ENCODE measurements at regions of chr6 and their contacts with region 1.

Region 1: DNA sequence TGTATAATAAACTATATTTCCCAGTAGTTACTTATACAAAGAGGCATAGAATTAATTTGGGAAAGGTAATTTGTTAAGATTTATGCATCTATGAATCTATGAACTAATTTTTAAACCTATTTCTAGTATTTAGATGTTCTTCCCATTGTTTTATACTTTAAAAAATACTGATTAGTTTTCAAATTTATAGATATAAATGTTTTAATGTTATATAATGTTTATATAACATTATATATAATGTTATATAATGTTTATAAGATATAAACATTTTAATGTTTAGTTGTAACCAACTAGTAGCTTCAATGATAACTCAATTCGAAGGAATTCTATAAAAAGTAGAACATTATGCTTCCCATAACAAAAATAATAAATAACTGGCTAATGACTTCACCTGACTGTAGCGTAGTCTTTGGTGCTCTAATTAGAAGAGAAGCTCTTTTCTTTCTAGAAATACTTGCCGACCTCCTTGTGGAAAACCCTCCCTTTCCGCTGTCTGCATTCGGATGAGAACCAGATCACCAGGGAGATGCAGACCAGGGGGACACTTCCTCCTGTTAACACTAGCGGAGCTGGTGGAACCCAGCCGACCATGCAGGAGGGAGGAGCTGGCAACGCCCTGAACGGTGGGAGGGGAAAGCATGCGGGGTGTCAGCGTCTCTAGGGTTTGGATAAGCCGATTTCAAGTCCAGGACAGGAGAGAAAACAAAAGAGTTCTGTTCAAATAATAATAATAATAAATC is 158.4 kb downstream of the OR2B2 start:
- DNase-seq: peak in 8 of 9 donors; percentile 38 to 69 (median 45)
- ATAC-seq: peak; percentile 22
- H3K4me3 ChIP-seq: peak overlapping the region; percentile 80
- H3K4me3 Mint-ChIP-seq: peak overlapping the region; percentile 81 to 99 (median 94)
- H3K27ac ChIP-seq: peak overlapping the region; percentile 96
- H3K27ac Mint-ChIP-seq: peak overlapping the region; percentile 84 to 100 (median 97)
- H3K4me1 ChIP-seq: peaks cover 6 to 20% of the 10 kb centered on the region in 2 donors
- H3K4me1 Mint-ChIP-seq: peaks cover 17 to 53% (median 39%) of the 10 kb centered on the region in 7 donors
- H3K27me3 ChIP-seq: no peaks in the 10 kb centered on the region
- H3K27me3 Mint-ChIP-seq: peaks cover 0 to 8% (median 0%) of the 10 kb centered on the region in 5 donors

Region 2: GRCh38 chr6:26025894-26026832 is 1727.7 kb before region 1 on chr6:
- CTCF ChIA-PET with region 1: no interaction called
- POLR2A ChIA-PET with region 1: interaction called, 3 read pairs
- intact Hi-C with region 1: loop called (anchors 5 to 10 kb)
- DNase-seq: peak; percentile 82 to 98 (median 95)
- ATAC-seq: peak; percentile 60
- H3K4me3 ChIP-seq: peak overlapping the region; percentile 75
- H3K4me3 Mint-ChIP-seq: peak overlapping the region; percentile 81 to 99 (median 94)
- H3K27ac ChIP-seq: peak overlapping the region; percentile 94
- H3K27ac Mint-ChIP-seq: peak overlapping the region; percentile 93 to 100 (median 98)
- H3K4me1 ChIP-seq: peaks cover 11 to 22% of the 10 kb centered on the region in 2 donors
- H3K4me1 Mint-ChIP-seq: peaks cover 12 to 81% (median 50%) of the 10 kb centered on the region in 7 donors
- H3K27me3 ChIP-seq: no peaks in the 10 kb centered on the region
- H3K27me3 Mint-ChIP-seq: peaks cover 0 to 9% (median 0%) of the 10 kb centered on the region in 5 donors

Region 3: GRCh38 chr6:26640806-26641205 is 1113.0 kb before region 1 on chr6:
- CTCF ChIA-PET with region 1: no interaction called
- POLR2A ChIA-PET with region 1: no interaction called
- intact Hi-C with region 1: no loop called
- DNase-seq: no peak
- ATAC-seq: no peak
- H3K4me3 ChIP-seq: no peak overlapping the region
- H3K4me3 Mint-ChIP-seq: no peak overlapping the region
- H3K27ac ChIP-seq: no peak overlapping the region
- H3K27ac Mint-ChIP-seq: no peak overlapping the region
- H3K4me1 ChIP-seq: no peaks in the 10 kb centered on the region
- H3K4me1 Mint-ChIP-seq: peaks cover 0 to 2% (median 0%) of the 10 kb centered on the region in 7 donors
- H3K27me3 ChIP-seq: no peaks in the 10 kb centered on the region
- H3K27me3 Mint-ChIP-seq: no peaks in the 10 kb centered on the region

Region 4: DNA sequence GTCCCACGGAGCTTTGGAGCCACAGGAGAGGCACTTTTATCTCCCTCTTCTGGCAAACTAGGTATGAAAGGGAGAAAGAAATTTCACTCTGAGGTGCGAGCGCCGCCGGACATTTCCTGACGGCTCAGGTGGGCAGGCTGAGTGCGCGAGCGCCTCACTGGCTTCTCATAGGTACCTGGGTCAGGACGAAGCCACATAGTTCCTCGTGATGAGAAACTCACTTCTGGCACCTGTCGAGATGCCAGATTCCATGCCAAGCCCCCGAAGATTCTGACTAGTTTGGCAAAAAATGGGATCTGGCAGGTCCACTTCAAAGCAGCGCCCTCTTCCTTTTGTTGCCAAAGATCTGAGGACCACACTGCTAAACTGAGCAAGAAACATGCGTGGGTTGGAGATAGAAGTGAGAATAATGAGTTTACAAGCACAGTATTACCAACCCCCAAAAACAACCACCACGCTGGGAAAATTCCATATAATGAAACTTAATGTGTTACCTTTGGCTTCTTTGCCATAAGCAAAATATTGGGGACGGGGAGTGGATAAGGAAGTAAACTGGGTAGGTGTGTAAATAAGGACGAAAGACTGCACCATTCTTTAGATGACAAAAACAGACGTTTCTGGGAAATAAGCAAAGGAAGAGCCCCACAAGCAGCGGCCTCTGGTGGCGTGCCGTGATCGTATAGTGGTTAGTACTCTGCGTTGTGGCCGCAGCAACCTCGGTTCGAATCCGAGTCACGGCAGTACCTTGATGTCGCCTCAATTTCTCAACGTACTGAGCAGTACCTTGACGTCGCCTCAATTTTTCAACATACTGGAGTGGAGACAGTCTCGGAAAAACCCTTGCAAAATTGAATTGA is 596.2 kb before region 1 on chr6:
- CTCF ChIA-PET with region 1: interaction called, 4 read pairs
- POLR2A ChIA-PET with region 1: interaction called, 4 read pairs
- intact Hi-C with region 1: loop called (anchors 1 to 2 kb)
- DNase-seq: peak in 8 of 9 donors; percentile 77 to 92 (median 87)
- ATAC-seq: peak; percentile 86
- H3K4me3 ChIP-seq: peak overlapping the region; percentile 76
- H3K4me3 Mint-ChIP-seq: peak overlapping the region; percentile 82 to 94 (median 87)
- H3K27ac ChIP-seq: peak overlapping the region; percentile 54
- H3K27ac Mint-ChIP-seq: peak overlapping the region; percentile 80 to 96 (median 92)
- H3K4me1 ChIP-seq: peaks cover 12% of the 10 kb centered on the region in 2 donors
- H3K4me1 Mint-ChIP-seq: peaks cover 29 to 47% (median 43%) of the 10 kb centered on the region in 7 donors
- H3K27me3 ChIP-seq: no peaks in the 10 kb centered on the region
- H3K27me3 Mint-ChIP-seq: peaks cover 0 to 6% (median 0%) of the 10 kb centered on the region in 5 donors

Region 5: DNA sequence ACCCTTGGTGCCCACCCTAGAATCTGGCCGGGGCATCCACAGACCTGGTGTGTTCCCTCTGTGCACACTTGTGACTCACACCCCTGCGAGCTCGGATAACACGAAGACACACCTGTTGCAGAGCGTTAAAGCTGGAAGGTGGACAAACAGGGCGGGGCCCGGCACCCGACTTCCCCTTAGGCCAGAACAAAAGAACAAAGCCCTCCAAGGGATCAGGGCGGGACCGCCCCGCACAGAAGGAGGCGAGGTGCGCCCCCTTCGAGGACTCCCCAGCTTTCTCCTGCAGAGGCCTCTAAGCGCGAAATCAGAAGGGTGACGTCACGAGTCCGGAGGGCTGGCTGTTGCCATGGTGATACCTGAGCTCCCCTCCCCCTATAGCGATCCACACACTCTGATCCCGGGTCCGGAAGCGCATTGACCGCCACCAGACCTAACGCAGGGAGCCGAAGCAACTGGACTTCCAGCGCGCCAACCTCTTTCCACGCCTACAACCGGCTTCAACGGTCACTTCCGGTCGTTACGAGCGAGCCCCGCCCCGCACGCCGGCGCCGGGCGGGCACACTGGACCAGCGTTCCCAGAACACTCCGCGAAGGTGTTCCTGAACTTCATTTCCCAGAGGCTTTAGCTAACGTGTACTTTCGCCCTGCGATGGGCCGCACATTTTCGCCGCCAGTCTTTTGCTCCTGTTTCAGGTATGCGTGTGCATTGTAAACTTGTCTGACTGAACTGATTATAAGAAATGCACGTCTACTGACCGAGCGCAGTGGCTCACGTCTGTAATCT is 281.0 kb before region 1 on chr6 and contains the start of gene ZNF184:
- CTCF ChIA-PET with region 1: interaction called, 3 read pairs
- POLR2A ChIA-PET with region 1: interaction called, 8 read pairs
- intact Hi-C with region 1: loop called (anchors 1 kb)
- DNase-seq: peak; percentile 74 to 88 (median 86)
- ATAC-seq: peak; percentile 88
- H3K4me3 ChIP-seq: peak within 1 kb of the TSS; percentile 85
- H3K4me3 Mint-ChIP-seq: peak within 1 kb of the TSS; percentile 85 to 98 (median 97)
- H3K27ac ChIP-seq: peak within 1 kb of the TSS; percentile 93
- H3K27ac Mint-ChIP-seq: peak within 1 kb of the TSS; percentile 90 to 99 (median 96)
- H3K4me1 ChIP-seq: peaks cover 13 to 23% of the 10 kb centered on the region in 2 donors
- H3K4me1 Mint-ChIP-seq: peaks cover 40 to 55% (median 52%) of the 10 kb centered on the region in 7 donors
- H3K27me3 ChIP-seq: no peaks in the 10 kb centered on the region
- H3K27me3 Mint-ChIP-seq: peaks cover 0 to 9% (median 0%) of the 10 kb centered on the region in 5 donors
- total RNA-seq, gene ZNF184: 9.6 to 13.7 (median 12.3) TPM

Region 6: DNA sequence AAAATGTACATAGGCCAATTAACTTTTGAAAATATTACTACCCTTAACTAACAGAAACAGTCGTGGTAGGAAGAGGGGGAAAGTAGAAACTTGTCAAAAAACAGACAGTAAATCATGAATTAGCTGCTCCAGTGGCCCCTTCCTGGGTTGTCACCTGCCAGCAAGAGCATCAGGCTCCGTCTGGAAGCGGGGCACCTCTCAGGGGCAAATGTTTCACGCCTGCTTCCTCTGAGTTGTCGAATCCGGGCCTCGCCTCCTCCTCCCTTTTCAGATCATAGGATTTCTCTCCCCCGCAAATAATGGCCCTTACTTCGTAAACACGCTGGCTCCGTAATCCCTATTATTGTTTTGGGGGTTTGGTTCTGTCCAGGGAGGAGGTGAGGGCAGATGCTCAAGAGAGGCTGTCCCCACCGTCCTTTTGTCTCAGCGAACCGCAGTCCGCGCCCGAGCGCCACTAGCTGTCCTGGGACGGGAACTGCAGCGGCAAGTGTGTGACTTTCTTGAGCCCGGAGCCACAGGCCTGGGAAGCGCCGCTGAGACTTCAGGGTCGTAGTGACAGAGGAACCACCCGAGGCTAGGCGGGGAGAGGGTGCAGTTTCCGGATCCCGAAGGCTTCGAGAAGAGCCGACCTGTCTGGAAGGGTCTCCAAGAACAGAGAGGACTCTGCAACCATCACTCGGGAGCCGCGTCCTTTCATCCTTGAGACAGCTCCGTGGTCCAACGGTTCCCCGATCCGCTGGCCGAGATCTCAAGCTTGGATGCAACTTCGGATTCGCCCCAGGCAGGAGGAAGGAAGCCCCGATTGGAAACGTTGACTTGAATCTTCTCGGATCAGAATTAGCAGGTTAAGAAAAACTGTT is 66.5 kb before region 1 on chr6:
- CTCF ChIA-PET with region 1: interaction called, 12 read pairs
- POLR2A ChIA-PET with region 1: interaction called, 4 read pairs
- intact Hi-C with region 1: loop called (anchors 1 kb)
- DNase-seq: peak; percentile 57 to 79 (median 65)
- ATAC-seq: peak; percentile 81
- H3K4me3 ChIP-seq: peak overlapping the region; percentile 88
- H3K4me3 Mint-ChIP-seq: peak overlapping the region; percentile 87 to 96 (median 94)
- H3K27ac ChIP-seq: peak overlapping the region; percentile 61
- H3K27ac Mint-ChIP-seq: peak overlapping the region; percentile 86 to 100 (median 97)
- H3K4me1 ChIP-seq: peaks cover 4 to 6% of the 10 kb centered on the region in 2 donors
- H3K4me1 Mint-ChIP-seq: peaks cover 7 to 40% (median 27%) of the 10 kb centered on the region in 7 donors
- H3K27me3 ChIP-seq: no peaks in the 10 kb centered on the region
- H3K27me3 Mint-ChIP-seq: peaks cover 5 to 34% (median 5%) of the 10 kb centered on the region in 5 donors

Region 7: GRCh38 chr6:27706431-27706830 is 47.4 kb before region 1 on chr6:
- CTCF ChIA-PET with region 1: no interaction called
- POLR2A ChIA-PET with region 1: no interaction called
- intact Hi-C with region 1: no loop called
- DNase-seq: no peak
- ATAC-seq: no peak
- H3K4me3 ChIP-seq: no peak overlapping the region
- H3K4me3 Mint-ChIP-seq: no peak overlapping the region
- H3K27ac ChIP-seq: no peak overlapping the region
- H3K27ac Mint-ChIP-seq: no peak overlapping the region
- H3K4me1 ChIP-seq: no peaks in the 10 kb centered on the region
- H3K4me1 Mint-ChIP-seq: peaks cover 0 to 5% (median 0%) of the 10 kb centered on the region in 7 donors
- H3K27me3 ChIP-seq: no peaks in the 10 kb centered on the region
- H3K27me3 Mint-ChIP-seq: no peaks in the 10 kb centered on the region

Region 8: DNA sequence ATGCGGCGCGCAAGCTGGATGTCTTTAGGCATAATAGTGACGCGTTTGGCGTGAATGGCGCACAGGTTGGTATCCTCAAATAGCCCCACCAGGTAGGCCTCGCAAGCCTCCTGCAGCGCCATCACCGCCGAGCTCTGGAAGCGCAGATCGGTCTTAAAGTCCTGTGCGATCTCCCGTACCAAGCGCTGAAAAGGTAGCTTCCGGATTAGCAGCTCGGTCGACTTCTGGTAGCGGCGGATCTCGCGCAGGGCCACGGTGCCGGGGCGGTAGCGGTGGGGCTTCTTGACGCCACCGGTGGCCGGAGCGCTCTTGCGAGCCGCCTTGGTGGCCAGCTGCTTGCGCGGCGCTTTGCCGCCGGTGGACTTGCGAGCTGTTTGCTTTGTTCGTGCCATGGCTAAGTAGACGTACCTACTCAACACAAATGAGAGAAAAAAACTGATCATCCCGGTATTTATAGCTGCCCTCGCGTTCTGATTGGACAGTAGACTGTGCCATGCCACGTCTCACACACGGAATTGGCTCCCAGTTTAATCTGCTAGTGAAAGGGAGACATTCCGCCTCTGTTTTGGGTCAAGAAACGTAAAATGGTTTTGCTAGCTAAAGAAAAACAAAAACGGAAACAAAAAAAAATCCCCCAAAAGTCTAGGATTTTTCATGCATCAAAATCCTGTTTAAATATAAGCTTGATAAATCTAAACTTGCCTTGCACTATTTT is 118.2 kb after region 1 on chr6:
- CTCF ChIA-PET with region 1: no interaction called
- POLR2A ChIA-PET with region 1: interaction called, 6 read pairs
- intact Hi-C with region 1: loop called in 1 of 2 experiments (anchors 1 kb)
- DNase-seq: peak; percentile 68 to 97 (median 94)
- ATAC-seq: peak; percentile 88
- H3K4me3 ChIP-seq: peak overlapping the region; percentile 69
- H3K4me3 Mint-ChIP-seq: peak overlapping the region; percentile 83 to 99 (median 94)
- H3K27ac ChIP-seq: peak overlapping the region; percentile 84
- H3K27ac Mint-ChIP-seq: peak overlapping the region; percentile 95 to 98 (median 97)
- H3K4me1 ChIP-seq: peaks cover under 1 to 19% of the 10 kb centered on the region in 2 donors
- H3K4me1 Mint-ChIP-seq: peaks cover 15 to 69% (median 42%) of the 10 kb centered on the region in 7 donors
- H3K27me3 ChIP-seq: no peaks in the 10 kb centered on the region
- H3K27me3 Mint-ChIP-seq: peaks cover 0 to 8% (median 0%) of the 10 kb centered on the region in 5 donors

Region 9: DNA sequence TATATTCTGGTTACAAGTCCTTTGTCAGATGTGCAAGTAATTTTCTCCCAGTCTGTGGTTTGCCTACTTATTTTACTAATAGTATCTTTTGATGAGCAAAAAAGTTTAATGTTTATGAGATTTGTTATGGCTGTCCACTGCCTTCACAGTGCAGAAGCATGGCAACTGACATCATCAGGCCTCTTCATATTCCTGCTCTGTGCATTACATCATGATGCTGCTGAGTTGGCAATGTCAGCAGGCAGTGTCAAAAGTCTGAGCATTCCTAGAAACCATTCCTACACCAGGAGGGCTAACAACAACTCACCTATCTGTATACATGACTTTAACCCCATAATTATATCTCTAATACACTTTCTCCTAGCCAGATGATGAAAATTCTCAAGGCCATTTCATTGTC is 169.1 kb after region 1 on chr6:
- CTCF ChIA-PET with region 1: no interaction called
- POLR2A ChIA-PET with region 1: no interaction called
- intact Hi-C with region 1: no loop called
- DNase-seq: no peak
- ATAC-seq: no peak
- H3K4me3 ChIP-seq: no peak overlapping the region
- H3K4me3 Mint-ChIP-seq: no peak overlapping the region
- H3K27ac ChIP-seq: no peak overlapping the region
- H3K27ac Mint-ChIP-seq: no peak overlapping the region
- H3K4me1 ChIP-seq: no peaks in the 10 kb centered on the region
- H3K4me1 Mint-ChIP-seq: no peaks in the 10 kb centered on the region
- H3K27me3 ChIP-seq: no peaks in the 10 kb centered on the region
- H3K27me3 Mint-ChIP-seq: peaks cover 25 to 51% (median 35%) of the 10 kb centered on the region in 5 donors

Region 10: GRCh38 chr6:28863604-28864320 is 1109.9 kb after region 1 on chr6:
- CTCF ChIA-PET with region 1: no interaction called
- POLR2A ChIA-PET with region 1: no interaction called
- intact Hi-C with region 1: loop called in 1 of 2 experiments (anchors 1 kb)
- DNase-seq: peak; percentile 60 to 93 (median 89)
- ATAC-seq: peak; percentile 64
- H3K4me3 ChIP-seq: peak overlapping the region; percentile 95
- H3K4me3 Mint-ChIP-seq: peak overlapping the region; percentile 90 to 98 (median 92)
- H3K27ac ChIP-seq: peak overlapping the region; percentile 75
- H3K27ac Mint-ChIP-seq: peak overlapping the region; percentile 89 to 100 (median 95)
- H3K4me1 ChIP-seq: peaks cover 11 to 18% of the 10 kb centered on the region in 2 donors
- H3K4me1 Mint-ChIP-seq: peaks cover 15 to 69% (median 53%) of the 10 kb centered on the region in 7 donors
- H3K27me3 ChIP-seq: no peaks in the 10 kb centered on the region
- H3K27me3 Mint-ChIP-seq: peaks cover 0 to 30% (median 4%) of the 10 kb centered on the region in 5 donors

Measured in naive thymus-derived CD4-positive, alpha-beta T cell (primary cell).